ENCODE measurements at regions of chr13 and their contacts with region 1.

Region 1: GRCh38 chr13:49606747-49607648 is 21.3 kb upstream of the ARL11 start:
- DNase-seq: peak; percentile 84
- ATAC-seq: peak; percentile 78
- H3K4me3 ChIP-seq: peak overlapping the region; percentile 50; the same call in 1 of the 2 replicates
- H3K27ac ChIP-seq: no peak overlapping the region
- H3K4me1 ChIP-seq: peaks cover 15% of the 10 kb centered on the region
- H3K27me3 ChIP-seq: no peaks in the 10 kb centered on the region
- CTCF ChIP-seq: peak; percentile 81

Region 2: DNA sequence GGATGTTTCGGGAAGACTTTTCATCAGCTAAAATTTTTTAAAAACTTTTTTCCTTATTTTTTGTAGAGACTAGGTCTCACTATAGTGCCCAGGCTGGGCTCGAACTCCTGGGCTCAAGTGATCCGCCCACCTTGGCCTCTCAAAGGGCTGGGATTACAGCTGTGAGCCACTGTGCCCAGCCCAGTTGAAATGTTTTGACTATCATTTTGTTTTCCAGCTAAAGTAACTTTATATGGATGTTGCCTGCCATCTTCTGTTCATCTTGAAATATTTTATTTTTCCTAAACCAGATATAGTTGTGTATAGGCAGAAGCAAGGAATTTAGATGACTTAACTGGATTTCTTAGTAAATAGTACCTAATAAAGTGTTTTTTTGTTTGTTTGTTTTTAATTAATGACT is 170.1 kb before region 1 on chr13:
- CTCF ChIA-PET with region 1: interaction called, 3 read pairs
- POLR2A ChIA-PET with region 1: no interaction called
- intact Hi-C with region 1: loop called (anchors 2 kb)
- DNase-seq: peak; percentile 38
- ATAC-seq: peak; percentile 60
- H3K4me3 ChIP-seq: no peak overlapping the region
- H3K27ac ChIP-seq: no peak overlapping the region
- H3K4me1 ChIP-seq: peaks cover 6% of the 10 kb centered on the region
- H3K27me3 ChIP-seq: no peaks in the 10 kb centered on the region
- CTCF ChIP-seq: peak; percentile 41

Region 3: GRCh38 chr13:49495783-49496762 is 110.9 kb before region 1 on chr13 and contains the start of gene PHF11:
- CTCF ChIA-PET with region 1: interaction called, 3 read pairs
- POLR2A ChIA-PET with region 1: interaction called, 7 read pairs
- intact Hi-C with region 1: loop called (anchors 5 kb)
- DNase-seq: peak; percentile 60
- ATAC-seq: peak; percentile 74
- H3K4me3 ChIP-seq: peak within 1 kb of the TSS; percentile 72
- H3K27ac ChIP-seq: peak within 1 kb of the TSS; percentile 68
- H3K4me1 ChIP-seq: peaks cover 26% of the 10 kb centered on the region
- H3K27me3 ChIP-seq: no peaks in the 10 kb centered on the region
- CTCF ChIP-seq: no peak
- total RNA-seq, gene PHF11: 7.1 and 7.9 TPM in 2 replicates

Region 4: DNA sequence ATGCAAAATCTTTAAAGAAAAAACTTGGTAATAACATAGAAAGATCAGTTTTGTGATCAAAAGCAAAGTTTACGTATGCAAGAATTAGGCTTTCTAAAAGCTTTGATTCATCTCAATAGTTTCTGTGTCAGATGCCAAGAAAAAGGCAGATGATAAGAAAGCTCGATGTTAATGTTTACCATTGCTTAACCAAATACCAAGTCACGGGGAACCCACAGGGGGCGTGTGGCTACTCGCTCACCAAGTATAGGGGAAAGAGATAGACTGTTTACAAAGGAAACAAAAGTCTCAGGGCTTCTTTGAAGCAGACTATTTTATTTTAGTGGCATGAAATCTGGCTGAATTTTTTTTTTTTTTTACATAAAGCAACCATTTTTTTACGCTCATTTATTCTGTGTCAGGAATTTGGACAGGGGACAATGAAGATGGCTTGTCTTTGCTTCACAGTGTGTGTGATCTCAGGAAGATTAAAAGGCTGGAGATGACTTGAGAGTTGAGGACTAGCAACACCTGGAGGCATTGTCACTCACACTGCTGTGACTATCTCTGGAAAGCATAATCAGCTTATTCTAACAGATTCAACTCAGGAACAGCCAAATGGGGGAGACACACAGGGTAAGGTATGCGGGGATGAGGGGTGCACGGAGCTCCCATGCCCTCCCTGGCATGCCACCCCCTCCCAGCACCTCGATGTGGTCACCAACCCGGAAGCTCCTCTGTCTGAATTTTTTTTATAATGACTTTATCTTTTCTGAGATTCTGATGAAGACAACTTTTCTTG is 46.5 kb before region 1 on chr13:
- CTCF ChIA-PET with region 1: no interaction called
- POLR2A ChIA-PET with region 1: no interaction called
- intact Hi-C with region 1: loop called (anchors 1 kb)
- DNase-seq: peak; percentile 38
- ATAC-seq: peak; percentile 88
- H3K4me3 ChIP-seq: no peak overlapping the region
- H3K27ac ChIP-seq: no peak overlapping the region
- H3K4me1 ChIP-seq: 0 out of 2 replicates have a peak, but pooled peaks cover 3% of the 10 kb centered on the region
- H3K27me3 ChIP-seq: no peaks in the 10 kb centered on the region
- CTCF ChIP-seq: peak; percentile 53

Region 5: GRCh38 chr13:49792550-49793324 is 185.7 kb after region 1 on chr13 and contains the start of gene KPNA3:
- CTCF ChIA-PET with region 1: interaction called, 12 read pairs
- POLR2A ChIA-PET with region 1: interaction called, 17 read pairs
- intact Hi-C with region 1: no loop called
- DNase-seq: peak; percentile 90
- ATAC-seq: peak; percentile 87
- H3K4me3 ChIP-seq: peak within 1 kb of the TSS; percentile 80
- H3K27ac ChIP-seq: peak within 1 kb of the TSS; percentile 91
- H3K4me1 ChIP-seq: peaks cover 18% of the 10 kb centered on the region
- H3K27me3 ChIP-seq: no peaks in the 10 kb centered on the region
- CTCF ChIP-seq: no peak
- total RNA-seq, gene KPNA3: 11.7 and 14.4 TPM in 2 replicates

Region 6: GRCh38 chr13:50189450-50189849 is 582.5 kb after region 1 on chr13:
- CTCF ChIA-PET with region 1: no interaction called
- POLR2A ChIA-PET with region 1: no interaction called
- intact Hi-C with region 1: no loop called
- DNase-seq: no peak
- ATAC-seq: no peak
- H3K4me3 ChIP-seq: no peak overlapping the region
- H3K27ac ChIP-seq: no peak overlapping the region
- H3K4me1 ChIP-seq: no peaks in the 10 kb centered on the region
- H3K27me3 ChIP-seq: no peaks in the 10 kb centered on the region
- CTCF ChIP-seq: no peak; the same call in 1 of the 2 replicates